Activated CD8-positive, alpha-beta memory T cell treated with anti-CD3 and anti-CD28 coated beads, Interleukin-2, amount 10 ng/mL, durations not matched to agents 7 days and 5 days (primary cell): ENCODE measurements at regions of chr15 and their contacts with region 1.

Region 1: GRCh38 chr15:63497642-63498467 is 6.5 kb upstream of the USP3 start:
- DNase-seq: peak; percentile 86
- ATAC-seq: peak; percentile 47
- H3K4me3 Mint-ChIP-seq: no peak overlapping the region
- H3K27ac Mint-ChIP-seq: no peak overlapping the region
- H3K4me1 Mint-ChIP-seq: peaks cover 72% of the 10 kb centered on the region
- H3K27me3 Mint-ChIP-seq: no peaks in the 10 kb centered on the region

Region 2: GRCh38 chr15:63481105-63481810 is 16.6 kb before region 1 on chr15:
- CTCF ChIA-PET with region 1: interaction called, 67 read pairs
- DNase-seq: no peak
- ATAC-seq: peak; percentile 37
- H3K4me3 Mint-ChIP-seq: no peak overlapping the region
- H3K27ac Mint-ChIP-seq: no peak overlapping the region
- H3K4me1 Mint-ChIP-seq: peaks cover 51% of the 10 kb centered on the region
- H3K27me3 Mint-ChIP-seq: no peaks in the 10 kb centered on the region

Region 3: GRCh38 chr15:63487076-63487757 is 10.6 kb before region 1 on chr15:
- CTCF ChIA-PET with region 1: interaction called, 88 read pairs
- DNase-seq: peak; percentile 94
- ATAC-seq: peak; percentile 96
- H3K4me3 Mint-ChIP-seq: peak overlapping the region; percentile 53
- H3K27ac Mint-ChIP-seq: peak overlapping the region; percentile 70
- H3K4me1 Mint-ChIP-seq: peaks cover 51% of the 10 kb centered on the region
- H3K27me3 Mint-ChIP-seq: peaks cover 7% of the 10 kb centered on the region